Psoas muscle (tissue), 8 donors: ENCODE measurements at regions of chr10 and their contacts with region 1.

Region 1: GRCh38 chr10:34434119-34434594 is 380.9 kb downstream of the PARD3 start:
- DNase-seq: no peak
- ATAC-seq: peak; percentile 35 to 85 (median 65)
- H3K4me3 ChIP-seq: no peak overlapping the region
- H3K27ac ChIP-seq: no peak overlapping the region
- H3K4me1 ChIP-seq: peaks cover 50% of the 10 kb centered on the region
- H3K27me3 ChIP-seq: no peaks in the 10 kb centered on the region
- CTCF ChIP-seq: no peak

Region 2: GRCh38 chr10:34200355-34200901 is 233.7 kb before region 1 on chr10:
- intact Hi-C with region 1: no loop called
- DNase-seq: no peak
- ATAC-seq: no peak
- H3K4me3 ChIP-seq: no peak overlapping the region
- H3K27ac ChIP-seq: no peak overlapping the region
- H3K4me1 ChIP-seq: no peaks in the 10 kb centered on the region
- H3K27me3 ChIP-seq: no peaks in the 10 kb centered on the region
- CTCF ChIP-seq: no peak

Region 3: DNA sequence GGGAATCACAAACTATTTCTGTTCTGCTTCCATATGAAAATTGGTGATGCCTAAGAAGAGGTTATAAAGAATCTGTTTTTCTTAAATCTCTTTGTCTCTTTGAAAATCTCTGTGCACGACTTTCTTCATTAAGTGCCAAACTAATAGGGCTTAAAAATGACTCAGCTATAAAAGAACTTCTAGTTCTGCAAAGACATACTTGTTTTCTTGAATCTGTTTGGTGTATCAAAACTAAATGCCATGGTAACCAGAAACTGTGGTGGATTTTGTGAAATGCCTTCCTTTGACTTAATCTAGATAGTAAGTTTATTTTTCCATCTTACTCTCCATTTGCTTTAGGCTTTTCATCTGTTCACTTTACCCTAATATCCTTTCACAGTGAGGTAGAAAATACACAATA is 36.8 kb before region 1 on chr10:
- intact Hi-C with region 1: loop called in 1 of 2 experiments (anchors 5 kb)
- DNase-seq: no peak
- ATAC-seq: no peak
- H3K4me3 ChIP-seq: no peak overlapping the region
- H3K27ac ChIP-seq: no peak overlapping the region
- H3K4me1 ChIP-seq: no peaks in the 10 kb centered on the region
- H3K27me3 ChIP-seq: no peaks in the 10 kb centered on the region
- CTCF ChIP-seq: no peak

Region 4: GRCh38 chr10:34454590-34455261 is 20.6 kb after region 1 on chr10:
- intact Hi-C with region 1: loop called in 1 of 2 experiments (anchors 1 kb)
- DNase-seq: no peak
- ATAC-seq: no peak
- H3K4me3 ChIP-seq: no peak overlapping the region
- H3K27ac ChIP-seq: no peak overlapping the region
- H3K4me1 ChIP-seq: no peaks in the 10 kb centered on the region
- H3K27me3 ChIP-seq: no peaks in the 10 kb centered on the region
- CTCF ChIP-seq: no peak